Activated naive CD4-positive, alpha-beta T cell treated with anti-CD3 and anti-CD28 coated beads for 36 hours (primary cell): ENCODE measurements at regions of chr1 and their contacts with region 1.

Region 1: GRCh38 chr1:18913065-18913835 is 10.9 kb upstream of the ALDH4A1 start:
- DNase-seq: peak; percentile 86
- H3K4me3 Mint-ChIP-seq: no peak overlapping the region
- H3K27ac Mint-ChIP-seq: peak overlapping the region; percentile 85
- H3K4me1 Mint-ChIP-seq: peaks cover 25% of the 10 kb centered on the region
- H3K27me3 Mint-ChIP-seq: no peaks in the 10 kb centered on the region

Region 2: GRCh38 chr1:18883636-18884418 is 29.4 kb before region 1 on chr1:
- CTCF ChIA-PET with region 1: interaction called, 9 read pairs
- intact Hi-C with region 1: loop called (anchors 2 kb)
- DNase-seq: peak; percentile 83
- H3K4me3 Mint-ChIP-seq: no peak overlapping the region
- H3K27ac Mint-ChIP-seq: peak overlapping the region; percentile 18
- H3K4me1 Mint-ChIP-seq: no peaks in the 10 kb centered on the region
- H3K27me3 Mint-ChIP-seq: no peaks in the 10 kb centered on the region

Region 3: DNA sequence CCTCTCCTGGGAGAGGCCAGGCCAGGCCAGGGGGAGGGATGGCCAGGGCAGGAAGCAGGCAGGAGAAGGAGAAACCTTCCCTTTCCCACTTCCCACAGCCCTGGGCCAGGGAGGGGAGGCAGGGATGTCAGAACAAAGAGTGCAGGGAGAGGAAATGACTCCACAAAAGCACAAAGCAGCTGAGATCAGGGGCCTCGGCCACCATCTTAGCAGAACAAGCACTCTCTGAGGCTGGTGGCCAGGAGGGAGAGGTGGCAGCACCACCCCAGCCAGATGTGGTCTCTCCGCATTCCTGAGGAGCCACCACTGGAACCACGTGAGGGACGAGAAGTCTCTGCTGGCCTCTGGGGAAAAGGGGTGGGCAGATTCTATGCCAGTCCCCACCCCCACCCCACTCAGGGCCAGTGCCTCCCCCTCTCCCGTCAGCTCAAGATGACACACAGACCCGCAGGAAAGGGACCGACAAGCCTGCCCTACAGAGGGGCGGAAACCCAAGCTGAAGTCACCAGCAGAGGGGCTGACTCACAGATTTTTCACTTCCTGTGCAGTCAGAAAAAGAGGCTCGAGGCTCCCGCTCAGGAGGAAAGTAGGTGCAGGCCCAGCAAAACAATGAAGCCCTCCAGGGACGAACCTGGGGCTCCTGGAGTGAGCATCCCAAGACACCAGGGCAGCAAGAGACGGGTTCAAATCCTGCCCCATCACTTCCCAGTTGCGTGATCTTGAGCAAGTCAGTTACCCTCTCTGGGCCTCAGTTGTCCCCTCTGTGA is 13.2 kb after region 1 on chr1:
- CTCF ChIA-PET with region 1: interaction called, 46 read pairs
- intact Hi-C with region 1: no loop called
- DNase-seq: peak; percentile 95
- H3K4me3 Mint-ChIP-seq: peak overlapping the region; percentile 80
- H3K27ac Mint-ChIP-seq: peak overlapping the region; percentile 99
- H3K4me1 Mint-ChIP-seq: peaks cover 74% of the 10 kb centered on the region
- H3K27me3 Mint-ChIP-seq: no peaks in the 10 kb centered on the region

Region 4: GRCh38 chr1:18956369-18957135 is 43.3 kb after region 1 on chr1 and contains the start of gene IFFO2:
- CTCF ChIA-PET with region 1: interaction called, 10 read pairs
- intact Hi-C with region 1: no loop called
- DNase-seq: peak; percentile 98
- H3K4me3 Mint-ChIP-seq: peak within 1 kb of the TSS; percentile 91
- H3K27ac Mint-ChIP-seq: peak within 1 kb of the TSS; percentile 47
- H3K4me1 Mint-ChIP-seq: peaks cover 48% of the 10 kb centered on the region
- H3K27me3 Mint-ChIP-seq: no peaks in the 10 kb centered on the region
- total RNA-seq, gene IFFO2: 24.9 to 27.0 TPM

Region 5: DNA sequence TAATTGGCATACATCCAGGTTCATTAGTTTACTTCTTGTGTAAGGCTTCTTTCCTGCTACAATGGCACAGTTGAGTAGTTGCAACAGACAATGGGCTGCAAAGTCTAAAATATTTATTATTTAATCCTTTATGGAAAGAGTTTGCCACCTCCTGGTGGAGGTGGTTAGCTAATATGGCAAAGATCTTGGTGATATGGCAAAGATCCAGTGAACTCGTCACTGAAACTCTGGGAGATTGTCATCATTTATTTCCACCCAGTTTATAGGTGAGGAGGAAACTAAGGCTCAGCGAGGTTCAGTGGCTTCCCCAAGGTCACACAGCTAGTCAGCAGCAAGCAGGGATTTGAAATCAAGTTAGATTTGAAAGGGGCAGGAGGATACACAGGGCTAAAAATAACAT is 59.3 kb after region 1 on chr1:
- CTCF ChIA-PET with region 1: interaction called, 21 read pairs
- intact Hi-C with region 1: no loop called
- DNase-seq: no peak
- H3K4me3 Mint-ChIP-seq: no peak overlapping the region
- H3K27ac Mint-ChIP-seq: no peak overlapping the region
- H3K4me1 Mint-ChIP-seq: peaks cover 3% of the 10 kb centered on the region
- H3K27me3 Mint-ChIP-seq: no peaks in the 10 kb centered on the region

Region 6: DNA sequence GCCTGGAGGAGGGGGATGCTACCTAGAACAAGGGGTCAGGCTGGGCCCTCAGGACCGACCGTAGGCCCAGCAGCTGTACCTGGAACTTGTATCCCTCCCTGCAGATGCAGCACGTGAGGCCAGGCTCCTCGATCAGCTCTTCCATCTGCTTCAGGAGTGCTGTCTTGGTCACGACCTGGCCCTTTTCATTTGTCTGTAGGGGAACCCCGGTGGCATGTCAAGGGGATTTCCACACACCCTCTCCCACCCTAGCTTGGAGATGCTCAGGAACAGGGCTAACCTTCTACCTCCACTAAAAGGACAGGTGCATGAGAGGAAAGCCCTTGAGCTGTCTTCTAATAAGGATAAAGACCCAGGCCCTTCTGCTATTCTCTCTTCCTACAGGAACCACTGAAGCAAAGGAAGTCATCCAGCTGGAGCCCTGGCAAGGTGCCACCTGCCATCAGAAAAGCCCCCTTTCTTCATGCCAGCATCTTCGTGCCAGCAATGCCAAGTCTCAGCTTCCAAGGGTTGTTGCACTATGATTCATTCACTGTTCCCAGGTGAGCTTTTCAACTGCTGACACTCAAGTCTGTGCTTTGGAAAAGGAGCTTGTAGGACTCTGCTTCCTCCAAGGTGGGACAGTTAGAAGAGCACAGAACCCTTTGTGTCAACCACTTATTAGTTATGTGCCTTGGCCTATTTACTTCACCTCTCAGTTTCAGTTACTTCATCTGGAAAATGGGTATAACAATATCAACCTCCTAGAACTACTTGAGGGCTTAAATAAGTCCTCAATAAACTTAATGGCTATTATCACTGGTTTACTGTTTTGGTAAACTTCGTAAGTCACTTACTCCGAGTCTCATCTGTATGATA is 174.7 kb after region 1 on chr1:
- CTCF ChIA-PET with region 1: interaction called, 17 read pairs
- intact Hi-C with region 1: no loop called
- DNase-seq: peak; percentile 54
- H3K4me3 Mint-ChIP-seq: no peak overlapping the region
- H3K27ac Mint-ChIP-seq: peak overlapping the region; percentile 19
- H3K4me1 Mint-ChIP-seq: peaks cover 28% of the 10 kb centered on the region
- H3K27me3 Mint-ChIP-seq: no peaks in the 10 kb centered on the region